Activated CD4-positive, alpha-beta T cell treated with anti-CD3 and anti-CD28 coated beads, Interleukin-2, amount 10 ng/mL, durations not matched to agents 24 days and 14 days (primary cell): ENCODE measurements at regions of chr6 and their contacts with region 1.

Region 1: DNA sequence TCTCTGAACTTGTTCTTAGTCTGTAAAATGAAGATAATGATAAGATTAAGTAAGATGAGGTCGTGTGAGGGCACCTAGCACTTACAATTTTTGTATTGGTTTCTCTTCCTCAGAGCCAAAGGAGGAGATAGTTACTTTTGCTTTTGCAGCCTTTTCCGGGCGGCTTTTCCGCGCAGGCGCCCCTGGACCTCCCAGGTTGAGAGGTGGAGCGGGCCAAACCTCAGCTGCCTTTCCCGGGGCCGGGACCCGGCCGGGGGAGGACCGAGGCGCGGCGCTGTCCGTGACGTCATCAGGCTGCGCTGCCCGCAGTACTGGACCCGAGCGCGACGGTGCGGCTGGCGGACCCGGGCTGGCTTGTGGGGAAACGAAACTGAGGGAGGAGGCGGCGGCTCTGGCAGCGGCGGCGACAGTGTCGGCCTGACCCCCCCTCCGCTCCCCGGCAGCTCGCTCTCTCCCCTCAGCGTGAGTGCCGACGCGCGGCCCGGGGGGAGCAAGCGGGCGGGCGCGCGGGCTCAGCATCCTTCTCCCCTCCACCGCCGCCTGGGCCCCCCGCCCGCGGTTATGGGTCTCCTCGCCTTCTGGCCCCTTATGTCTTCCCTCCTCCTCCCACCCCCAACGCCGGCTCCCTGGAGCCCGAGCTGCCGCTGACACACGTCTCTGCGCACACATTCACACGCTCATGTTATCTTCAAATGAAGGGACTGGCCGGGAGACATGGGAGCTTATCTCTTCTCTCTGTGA is at the start of gene CMTR1:
- DNase-seq: peak; percentile 100
- H3K4me3 Mint-ChIP-seq: peak within 1 kb of the TSS; percentile 96
- H3K27ac Mint-ChIP-seq: peak within 1 kb of the TSS; percentile 99
- H3K4me1 Mint-ChIP-seq: peaks cover 34% of the 10 kb centered on the region
- H3K27me3 Mint-ChIP-seq: peaks cover 8% of the 10 kb centered on the region
- total RNA-seq, gene CMTR1: 56.4 and 57.1 TPM in 2 replicates

Region 2: DNA sequence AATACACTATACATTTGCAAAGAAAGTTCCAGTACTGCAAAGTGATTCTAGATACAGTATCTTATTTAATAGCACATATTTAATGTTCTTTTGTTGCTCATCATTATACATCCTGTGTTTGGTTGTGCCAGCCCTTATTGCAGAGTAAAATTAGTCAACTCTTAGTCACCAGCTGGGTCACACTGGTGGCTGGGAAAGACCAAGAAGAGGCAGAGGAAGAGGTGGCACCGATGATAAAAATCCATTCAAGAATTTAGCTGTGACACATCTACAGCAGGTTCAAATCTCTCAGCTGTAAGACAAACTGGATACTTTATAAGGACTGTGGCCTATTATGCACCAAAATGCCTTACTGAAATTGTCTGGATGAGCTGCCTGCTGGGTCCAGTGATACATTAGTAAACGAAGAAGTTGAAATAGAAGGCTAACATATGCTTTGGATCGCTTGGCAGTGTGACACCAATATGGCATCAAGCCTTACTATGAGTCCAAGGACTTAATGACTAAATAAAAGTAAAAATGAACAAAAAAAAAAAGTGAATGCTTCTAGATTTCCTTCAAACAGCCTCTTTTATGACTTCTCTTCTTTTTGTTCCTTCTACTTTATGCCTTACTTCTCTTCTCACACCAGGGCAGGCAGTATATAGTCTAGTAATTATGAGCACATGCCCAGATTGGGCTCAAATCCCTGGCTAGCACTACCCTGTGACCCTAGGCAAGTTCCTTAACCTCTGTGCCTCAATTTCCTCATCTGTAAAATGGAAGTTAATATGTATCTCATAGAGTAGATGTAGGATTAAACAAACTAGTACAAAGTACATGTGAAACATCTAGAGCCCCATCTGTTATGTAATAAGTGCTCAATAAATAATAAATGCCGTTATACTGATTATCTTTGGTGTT is 108.7 kb before region 1 on chr6:
- intact Hi-C with region 1: loop called (anchors 1 kb)
- DNase-seq: no peak
- H3K4me3 Mint-ChIP-seq: no peak overlapping the region
- H3K27ac Mint-ChIP-seq: peak overlapping the region; percentile 8
- H3K4me1 Mint-ChIP-seq: peaks cover 17% of the 10 kb centered on the region
- H3K27me3 Mint-ChIP-seq: no peaks in the 10 kb centered on the region

Region 3: GRCh38 chr6:37487591-37488380 is 54.7 kb after region 1 on chr6:
- intact Hi-C with region 1: no loop called
- DNase-seq: no peak
- H3K4me3 Mint-ChIP-seq: no peak overlapping the region
- H3K27ac Mint-ChIP-seq: peak overlapping the region; percentile 53
- H3K4me1 Mint-ChIP-seq: peaks cover 32% of the 10 kb centered on the region
- H3K27me3 Mint-ChIP-seq: no peaks in the 10 kb centered on the region

Region 4: DNA sequence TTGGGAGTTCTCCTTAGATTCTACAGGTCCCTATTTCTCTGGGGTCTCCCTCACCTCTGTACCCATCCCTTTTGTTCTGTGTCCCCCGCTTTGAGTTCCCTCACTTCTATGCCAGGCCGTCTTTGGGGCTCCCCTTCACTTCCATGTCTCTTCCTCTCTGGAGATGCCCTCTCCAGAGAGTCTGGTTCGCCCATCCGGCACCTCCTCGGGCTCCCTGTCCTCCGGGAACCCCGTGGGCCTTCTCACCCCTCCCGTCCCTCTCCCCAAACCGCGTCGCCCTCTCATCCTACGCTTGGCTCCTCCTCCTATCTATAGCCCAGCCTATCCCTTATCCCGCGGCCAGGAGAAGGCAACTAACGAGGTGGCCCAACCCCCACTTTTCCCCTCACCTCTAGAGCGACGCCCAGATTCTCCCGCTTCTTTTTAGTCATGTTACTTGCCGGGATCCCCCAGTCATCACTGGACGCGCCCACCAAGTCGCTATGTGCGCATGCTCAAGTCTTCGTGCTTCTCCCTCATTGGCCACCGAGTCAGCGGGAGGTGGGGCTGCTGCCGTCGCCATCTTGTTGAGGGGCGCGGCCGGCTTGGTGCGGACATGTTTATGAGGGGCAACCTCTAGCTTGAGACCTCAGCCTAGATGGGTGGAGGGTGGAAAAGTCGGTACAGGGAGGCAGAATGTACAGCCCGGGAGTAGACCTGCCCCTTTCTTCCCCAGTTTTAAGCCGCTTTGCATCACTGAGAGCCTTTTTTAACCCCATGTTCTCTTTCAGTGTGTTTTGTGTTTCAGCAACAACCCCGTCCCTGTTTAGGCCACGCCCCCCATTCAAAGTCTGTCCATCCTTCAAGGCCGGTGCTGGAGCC is 66.6 kb after region 1 on chr6 and contains the start of gene CCDC167:
- intact Hi-C with region 1: loop called (anchors 5 kb)
- DNase-seq: peak; percentile 99
- H3K4me3 Mint-ChIP-seq: peak within 1 kb of the TSS; percentile 93
- H3K27ac Mint-ChIP-seq: peak within 1 kb of the TSS; percentile 94
- H3K4me1 Mint-ChIP-seq: peaks cover 70% of the 10 kb centered on the region
- H3K27me3 Mint-ChIP-seq: no peaks in the 10 kb centered on the region
- total RNA-seq, gene CCDC167: 59.1 and 62.4 TPM in 2 replicates

Region 5: DNA sequence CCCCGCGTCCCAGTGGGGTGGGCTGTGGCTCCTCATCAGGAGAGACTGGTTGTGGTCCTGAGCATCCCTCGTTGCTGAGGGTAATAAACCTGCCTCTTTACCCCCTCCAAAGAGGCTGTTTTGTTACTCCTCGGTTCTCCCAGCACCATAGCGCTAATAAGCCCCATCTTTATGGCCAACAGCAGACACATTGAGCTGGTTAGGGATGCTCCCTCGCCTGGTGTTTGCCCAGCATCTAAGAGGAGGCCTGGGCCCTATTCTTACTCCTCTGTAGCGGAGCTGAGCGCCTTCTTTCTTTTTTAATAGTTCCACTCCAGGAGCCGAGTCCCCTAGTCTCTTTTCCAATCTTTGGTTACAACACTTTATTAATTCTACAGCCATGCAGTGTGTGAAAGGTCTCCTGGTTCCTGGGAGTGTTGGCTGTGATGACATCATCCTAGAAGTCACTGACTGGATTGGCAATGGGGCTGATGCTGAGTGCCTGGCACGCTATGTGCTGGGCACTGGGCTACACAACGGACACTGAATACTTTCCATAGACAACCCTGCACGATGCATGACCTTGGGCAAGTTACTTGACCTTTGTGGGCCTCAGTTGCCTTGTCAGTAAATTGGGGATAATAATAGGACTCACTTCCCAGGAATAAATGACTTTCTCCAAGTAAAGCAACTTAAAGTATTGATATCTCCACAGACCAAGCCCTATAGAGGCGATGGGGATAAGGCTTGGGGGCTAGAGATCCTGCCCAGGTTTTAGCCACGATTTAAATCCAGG is 117.3 kb after region 1 on chr6:
- intact Hi-C with region 1: loop called (anchors 5 kb)
- DNase-seq: no peak
- H3K4me3 Mint-ChIP-seq: no peak overlapping the region
- H3K27ac Mint-ChIP-seq: no peak overlapping the region
- H3K4me1 Mint-ChIP-seq: peaks cover 27% of the 10 kb centered on the region
- H3K27me3 Mint-ChIP-seq: no peaks in the 10 kb centered on the region

Region 6: DNA sequence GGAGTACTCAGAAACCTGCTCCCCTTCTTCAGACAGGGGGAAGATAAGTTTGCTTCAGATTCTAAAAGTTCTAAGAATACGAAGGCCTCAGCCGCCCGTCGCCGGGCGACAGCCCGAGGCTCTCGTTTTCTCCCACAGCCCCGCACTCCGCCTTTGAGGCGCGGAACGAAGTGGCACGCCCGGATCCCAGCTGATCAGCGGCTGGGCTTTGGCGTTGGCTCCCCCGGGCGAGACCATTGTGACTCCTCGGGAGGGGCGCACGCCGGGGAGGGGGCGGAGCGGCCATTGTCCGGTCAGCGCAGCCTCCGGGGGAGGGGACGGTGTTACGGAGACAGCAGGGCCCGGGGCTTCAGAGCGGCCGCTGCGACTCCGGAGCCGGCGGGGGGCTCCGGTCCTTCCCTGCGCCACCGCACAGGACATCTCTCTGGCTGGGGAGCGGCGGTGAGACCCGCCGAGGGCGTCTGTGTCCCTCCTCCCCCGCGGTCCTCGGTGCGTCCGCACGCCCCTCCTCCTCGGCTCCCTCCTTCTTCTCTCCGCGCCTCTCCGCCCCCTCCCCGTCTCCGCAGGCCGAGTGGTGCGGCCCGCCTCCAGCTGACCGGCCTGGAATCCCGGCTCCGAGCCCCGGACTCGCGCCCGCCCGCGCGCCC is 386.2 kb after region 1 on chr6 and contains the start of gene ZFAND3:
- intact Hi-C with region 1: loop called (anchors 5 kb)
- DNase-seq: peak; percentile 98
- H3K4me3 Mint-ChIP-seq: peak within 1 kb of the TSS; percentile 99
- H3K27ac Mint-ChIP-seq: peak within 1 kb of the TSS; percentile 97
- H3K4me1 Mint-ChIP-seq: peaks cover 31% of the 10 kb centered on the region
- H3K27me3 Mint-ChIP-seq: peaks cover 5% of the 10 kb centered on the region
- total RNA-seq, gene ZFAND3: 31.5 and 39.6 TPM in 2 replicates